ENCODE measurements at regions of chr2 and their contacts with region 1.

Region 1: GRCh38 chr2:96856776-96857673 is 791 bp downstream of the ANKRD39 start:
- DNase-seq: peak in 3 of 5 donors; percentile 29 to 40 (median 38)
- H3K4me3 ChIP-seq: peak overlapping the region; percentile 20 to 70
- H3K4me3 Mint-ChIP-seq: peak overlapping the region; percentile 86 to 94 (median 90)
- H3K27ac ChIP-seq: peak overlapping the region; percentile 80
- H3K27ac Mint-ChIP-seq: peak overlapping the region; percentile 69 to 94 (median 86)
- H3K4me1 ChIP-seq: peaks cover 44% of the 10 kb centered on the region
- H3K4me1 Mint-ChIP-seq: peaks cover 22 to 63% (median 36%) of the 10 kb centered on the region in 4 donors
- H3K27me3 ChIP-seq: no peaks in the 10 kb centered on the region
- H3K27me3 Mint-ChIP-seq: no peaks in the 10 kb centered on the region

Region 2: DNA sequence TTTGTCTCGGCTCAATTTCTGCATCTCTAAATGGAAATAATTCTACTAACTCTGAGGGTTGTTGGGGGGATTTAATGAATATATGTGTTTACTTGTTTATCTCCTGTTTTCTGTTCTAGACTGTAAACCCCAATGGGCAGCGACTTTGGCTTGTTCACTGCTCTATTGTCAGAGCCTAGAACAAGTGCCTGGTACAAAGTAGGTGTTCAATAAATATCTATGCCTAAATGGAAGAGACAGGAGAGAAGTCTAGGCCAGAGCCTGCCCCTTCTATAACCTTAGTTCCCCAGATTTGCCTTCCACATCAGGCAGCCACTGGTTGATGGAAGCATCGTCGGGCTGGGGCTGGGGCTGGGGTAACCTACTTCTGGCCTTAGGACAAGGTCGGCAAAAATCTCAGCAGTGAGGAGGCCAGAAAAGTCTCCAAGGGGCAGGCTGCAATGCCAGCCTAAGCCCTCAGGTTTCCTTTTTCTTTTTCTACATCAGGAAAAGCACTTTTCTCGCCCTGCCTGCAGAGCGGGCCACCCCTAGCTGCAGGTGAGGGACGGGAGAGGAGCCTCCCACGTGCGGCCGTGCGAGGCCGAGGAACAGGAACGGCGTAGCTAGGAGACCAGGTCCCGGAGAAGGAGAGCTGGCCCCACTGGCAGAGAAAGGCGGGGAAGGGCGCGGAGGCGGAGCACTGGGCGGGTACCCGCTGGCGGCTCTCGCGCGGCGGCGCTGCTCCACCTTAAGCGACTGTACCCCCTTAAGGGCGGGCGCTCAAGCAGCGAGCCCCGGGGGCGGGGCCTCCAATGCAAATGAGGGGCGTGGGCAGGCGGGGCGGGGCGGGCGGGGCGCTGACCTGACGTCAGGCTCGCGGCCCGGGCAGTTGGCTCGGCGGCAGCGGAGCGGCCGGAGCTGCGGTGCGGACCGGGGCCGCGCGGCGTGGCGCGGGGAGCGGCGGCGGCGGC is 96.7 kb before region 1 on chr2 and contains the start of gene CNNM4:
- CTCF ChIA-PET with region 1: interaction called, 8 read pairs
- POLR2A ChIA-PET with region 1: interaction called, 12 read pairs
- intact Hi-C with region 1: loop called (anchors 5 kb)
- DNase-seq: peak; percentile 89 to 93 (median 91)
- H3K4me3 ChIP-seq: peak within 1 kb of the TSS; percentile 67 to 89
- H3K4me3 Mint-ChIP-seq: peak within 1 kb of the TSS; percentile 85 to 92 (median 89)
- H3K27ac ChIP-seq: peak within 1 kb of the TSS; percentile 76
- H3K27ac Mint-ChIP-seq: peak within 1 kb of the TSS; percentile 81 to 93 (median 93)
- H3K4me1 ChIP-seq: peaks cover 56% of the 10 kb centered on the region
- H3K4me1 Mint-ChIP-seq: peaks cover 36 to 59% (median 48%) of the 10 kb centered on the region in 4 donors
- H3K27me3 ChIP-seq: no peaks in the 10 kb centered on the region
- H3K27me3 Mint-ChIP-seq: no peaks in the 10 kb centered on the region
- total RNA-seq, gene CNNM4: 6.7 to 7.2 TPM

Region 3: DNA sequence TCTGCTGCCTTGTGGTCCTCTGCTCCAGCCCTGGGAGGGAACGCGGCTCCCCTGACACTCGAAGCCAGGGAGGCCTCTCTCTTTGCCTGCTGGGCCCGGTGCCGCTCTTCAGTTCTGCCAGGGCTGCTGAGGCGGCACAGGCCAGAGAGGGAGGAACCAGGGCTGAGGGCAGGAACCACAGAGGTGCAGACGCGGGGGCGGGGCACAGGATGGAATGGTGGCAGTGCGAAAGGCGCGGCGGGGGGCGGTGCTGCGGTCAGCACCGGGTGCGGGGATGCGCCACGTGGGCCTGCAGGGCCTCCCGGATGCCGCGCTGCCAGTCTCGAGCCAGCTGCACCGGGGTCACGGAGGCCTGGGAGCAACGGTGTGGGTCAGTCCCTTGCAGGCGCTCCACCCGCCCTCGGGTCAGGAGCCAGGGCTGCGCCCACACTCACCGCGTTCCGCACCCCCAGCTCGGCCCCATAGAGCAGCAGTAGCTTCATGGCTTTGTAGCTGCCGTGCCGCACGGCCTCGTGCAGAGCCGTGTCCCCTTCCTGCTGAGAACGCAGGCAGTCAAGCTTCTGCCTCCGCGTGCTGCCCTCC is 17.6 kb before region 1 on chr2:
- CTCF ChIA-PET with region 1: interaction called, 15 read pairs
- POLR2A ChIA-PET with region 1: interaction called, 37 read pairs
- intact Hi-C with region 1: no loop called
- DNase-seq: peak; percentile 84 to 89 (median 85)
- H3K4me3 ChIP-seq: peak overlapping the region in 1 of 2 donors; percentile 33
- H3K4me3 Mint-ChIP-seq: peak overlapping the region; percentile 45 to 80 (median 73)
- H3K27ac ChIP-seq: peak overlapping the region; percentile 55
- H3K27ac Mint-ChIP-seq: peak overlapping the region; percentile 74 to 95 (median 89)
- H3K4me1 ChIP-seq: peaks cover 22% of the 10 kb centered on the region
- H3K4me1 Mint-ChIP-seq: peaks cover 7 to 29% (median 19%) of the 10 kb centered on the region in 4 donors
- H3K27me3 ChIP-seq: no peaks in the 10 kb centered on the region
- H3K27me3 Mint-ChIP-seq: no peaks in the 10 kb centered on the region

Region 4: DNA sequence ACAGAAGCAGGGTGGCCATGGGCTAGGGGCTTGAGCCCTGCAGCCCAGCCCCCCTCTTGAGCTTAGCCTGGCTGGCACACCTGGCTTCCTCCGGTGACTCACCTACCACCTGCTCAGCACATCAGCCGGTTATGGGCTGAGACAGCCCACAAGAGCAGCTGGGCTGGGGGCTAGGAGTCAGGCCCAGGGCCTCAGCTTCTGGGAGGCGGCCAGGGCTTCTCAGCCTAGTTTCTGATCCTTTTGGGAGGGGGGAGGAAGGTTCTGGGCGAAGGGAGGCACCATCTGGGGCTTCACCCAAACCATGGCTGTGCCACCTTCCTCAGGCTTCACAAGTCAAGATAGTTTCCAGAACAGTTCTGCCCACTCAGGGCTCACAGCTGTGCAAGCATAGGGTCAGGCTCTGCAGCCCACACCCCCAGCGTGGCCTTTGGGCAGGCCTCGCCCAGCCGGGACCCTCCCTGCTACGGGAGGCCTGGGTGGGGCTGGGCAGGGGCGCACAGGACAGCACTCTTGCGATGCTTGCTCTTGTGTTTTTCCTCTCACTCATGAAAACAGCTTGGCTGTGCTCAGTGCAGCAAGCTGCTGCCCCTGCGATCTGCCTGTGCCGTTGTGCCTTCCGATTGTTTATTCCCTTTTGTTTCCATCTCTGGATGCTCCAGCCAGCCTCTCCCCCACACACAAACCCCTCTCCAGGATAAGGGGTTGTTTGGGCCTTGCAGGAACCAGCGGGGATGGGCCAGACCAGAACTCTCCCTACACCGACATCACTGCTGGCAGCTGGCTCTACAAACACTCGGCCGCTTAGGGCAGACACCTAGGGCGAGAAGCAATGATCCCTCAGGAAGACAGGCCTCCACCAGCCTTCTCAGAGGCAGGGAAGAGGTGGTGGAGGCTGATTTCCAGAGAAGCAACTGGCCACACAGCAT is 39.0 kb after region 1 on chr2:
- CTCF ChIA-PET with region 1: interaction called, 23 read pairs
- POLR2A ChIA-PET with region 1: interaction called, 8 read pairs
- intact Hi-C with region 1: no loop called
- DNase-seq: no peak
- H3K4me3 ChIP-seq: no peak overlapping the region
- H3K4me3 Mint-ChIP-seq: peak overlapping the region in 4 of 8 donors; percentile 36 to 64 (median 41)
- H3K27ac ChIP-seq: no peak overlapping the region
- H3K27ac Mint-ChIP-seq: peak overlapping the region; percentile 42 to 92 (median 79)
- H3K4me1 ChIP-seq: peaks cover 47% of the 10 kb centered on the region
- H3K4me1 Mint-ChIP-seq: peaks cover 34 to 63% (median 46%) of the 10 kb centered on the region in 4 donors
- H3K27me3 ChIP-seq: no peaks in the 10 kb centered on the region
- H3K27me3 Mint-ChIP-seq: no peaks in the 10 kb centered on the region

Region 5: GRCh38 chr2:96940001-96940615 is 83.1 kb after region 1 on chr2:
- CTCF ChIA-PET with region 1: interaction called, 624 read pairs
- POLR2A ChIA-PET with region 1: interaction called, 10 read pairs
- intact Hi-C with region 1: no loop called
- DNase-seq: no peak
- H3K4me3 ChIP-seq: no peak overlapping the region
- H3K4me3 Mint-ChIP-seq: peak overlapping the region in 5 of 8 donors; percentile 17 to 82 (median 67)
- H3K27ac ChIP-seq: no peak overlapping the region
- H3K27ac Mint-ChIP-seq: peak overlapping the region in 1 of 7 donors; percentile 37
- H3K4me1 ChIP-seq: peaks cover 26% of the 10 kb centered on the region
- H3K4me1 Mint-ChIP-seq: peaks cover 24 to 42% (median 27%) of the 10 kb centered on the region in 4 donors
- H3K27me3 ChIP-seq: no peaks in the 10 kb centered on the region
- H3K27me3 Mint-ChIP-seq: peaks cover 0 to 1% of the 10 kb centered on the region in 2 donors

Region 6: DNA sequence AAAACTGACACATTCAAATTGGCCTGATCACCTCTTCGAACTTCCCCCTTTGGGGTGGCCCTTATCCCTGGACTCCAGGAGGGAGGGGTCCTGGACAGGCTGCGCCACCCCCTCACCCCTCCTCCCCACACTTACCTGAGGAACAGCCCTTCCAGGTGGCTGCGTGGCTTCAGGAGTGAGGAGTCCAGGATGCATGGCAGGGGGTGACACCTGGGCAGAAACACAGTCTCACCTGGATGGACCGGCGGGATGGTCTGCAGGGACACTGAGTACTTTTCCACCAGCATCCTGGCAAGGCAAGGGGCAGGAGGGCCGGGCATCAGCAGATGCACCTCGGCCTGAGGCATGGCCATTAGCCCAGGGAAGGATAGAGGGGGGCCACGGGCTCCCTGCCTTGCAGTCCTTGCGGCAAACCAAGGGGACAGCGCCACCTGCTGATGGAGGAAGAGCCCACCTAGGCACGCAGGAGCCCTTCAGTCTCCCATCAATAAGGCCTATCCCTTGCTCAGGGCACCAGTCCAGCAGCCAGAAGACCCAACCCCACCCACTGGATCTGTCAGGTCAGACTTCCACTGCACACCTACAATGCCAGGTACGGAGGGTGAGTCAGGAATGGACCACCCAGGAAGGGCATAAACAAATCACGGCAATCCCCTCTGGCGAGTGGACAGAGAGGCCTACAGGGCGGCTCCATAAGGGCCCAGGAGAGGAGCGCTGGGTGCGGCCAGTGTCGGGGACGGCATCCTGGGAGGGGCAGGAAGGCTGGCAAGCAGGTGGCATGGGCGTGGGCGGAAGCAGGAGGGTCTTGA is 103.3 kb after region 1 on chr2:
- CTCF ChIA-PET with region 1: interaction called, 624 read pairs
- POLR2A ChIA-PET with region 1: interaction called, 194 read pairs
- intact Hi-C with region 1: loop called (anchors 1 kb)
- DNase-seq: peak; percentile 75 to 77 (median 76)
- H3K4me3 ChIP-seq: no peak overlapping the region
- H3K4me3 Mint-ChIP-seq: peak overlapping the region; percentile 49 to 78 (median 74)
- H3K27ac ChIP-seq: peak overlapping the region; percentile 58
- H3K27ac Mint-ChIP-seq: peak overlapping the region; percentile 91 to 99 (median 97)
- H3K4me1 ChIP-seq: peaks cover 58% of the 10 kb centered on the region
- H3K4me1 Mint-ChIP-seq: peaks cover 39 to 61% (median 50%) of the 10 kb centered on the region in 4 donors
- H3K27me3 ChIP-seq: no peaks in the 10 kb centered on the region
- H3K27me3 Mint-ChIP-seq: no peaks in the 10 kb centered on the region

Region 7: DNA sequence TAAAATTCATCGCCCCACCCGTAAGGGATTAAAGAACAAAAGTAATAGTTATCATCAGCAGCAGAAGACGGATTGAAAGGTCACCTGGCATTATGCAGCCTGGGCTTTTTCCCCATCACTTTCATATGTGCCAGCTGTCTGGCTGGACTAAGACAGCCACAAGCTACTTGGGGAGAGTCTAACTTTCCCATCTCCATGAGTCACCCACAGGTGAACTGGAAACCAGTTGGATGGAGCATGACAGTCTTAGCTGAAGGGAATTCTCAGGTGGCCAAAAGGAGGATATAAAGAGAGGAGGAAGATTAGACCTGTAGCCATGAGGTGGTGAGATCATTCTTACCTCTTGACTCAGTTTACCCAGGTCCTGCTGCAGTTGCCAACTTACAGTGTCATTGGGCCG is 136.3 kb after region 1 on chr2:
- CTCF ChIA-PET with region 1: no interaction called
- POLR2A ChIA-PET with region 1: no interaction called
- intact Hi-C with region 1: no loop called
- DNase-seq: no peak
- H3K4me3 ChIP-seq: no peak overlapping the region
- H3K4me3 Mint-ChIP-seq: no peak overlapping the region
- H3K27ac ChIP-seq: no peak overlapping the region
- H3K27ac Mint-ChIP-seq: peak overlapping the region in 1 of 7 donors; percentile 5
- H3K4me1 ChIP-seq: no peaks in the 10 kb centered on the region
- H3K4me1 Mint-ChIP-seq: no peaks in the 10 kb centered on the region
- H3K27me3 ChIP-seq: no peaks in the 10 kb centered on the region
- H3K27me3 Mint-ChIP-seq: peaks cover 1 to 4% of the 10 kb centered on the region in 2 donors

Region 8: GRCh38 chr2:97067279-97068004 is 210.4 kb after region 1 on chr2:
- CTCF ChIA-PET with region 1: no interaction called
- POLR2A ChIA-PET with region 1: no interaction called
- intact Hi-C with region 1: no loop called
- DNase-seq: no peak
- H3K4me3 ChIP-seq: no peak overlapping the region
- H3K4me3 Mint-ChIP-seq: no peak overlapping the region
- H3K27ac ChIP-seq: no peak overlapping the region
- H3K27ac Mint-ChIP-seq: no peak overlapping the region
- H3K4me1 ChIP-seq: no peaks in the 10 kb centered on the region
- H3K4me1 Mint-ChIP-seq: no peaks in the 10 kb centered on the region
- H3K27me3 ChIP-seq: no peaks in the 10 kb centered on the region
- H3K27me3 Mint-ChIP-seq: peaks cover 6 to 8% of the 10 kb centered on the region in 2 donors

Measured in CD4-positive, alpha-beta memory T cell (primary cell).